Stomach (tissue), 19 donors: ENCODE measurements at regions of chr10 and their contacts with region 1.

Region 1: DNA sequence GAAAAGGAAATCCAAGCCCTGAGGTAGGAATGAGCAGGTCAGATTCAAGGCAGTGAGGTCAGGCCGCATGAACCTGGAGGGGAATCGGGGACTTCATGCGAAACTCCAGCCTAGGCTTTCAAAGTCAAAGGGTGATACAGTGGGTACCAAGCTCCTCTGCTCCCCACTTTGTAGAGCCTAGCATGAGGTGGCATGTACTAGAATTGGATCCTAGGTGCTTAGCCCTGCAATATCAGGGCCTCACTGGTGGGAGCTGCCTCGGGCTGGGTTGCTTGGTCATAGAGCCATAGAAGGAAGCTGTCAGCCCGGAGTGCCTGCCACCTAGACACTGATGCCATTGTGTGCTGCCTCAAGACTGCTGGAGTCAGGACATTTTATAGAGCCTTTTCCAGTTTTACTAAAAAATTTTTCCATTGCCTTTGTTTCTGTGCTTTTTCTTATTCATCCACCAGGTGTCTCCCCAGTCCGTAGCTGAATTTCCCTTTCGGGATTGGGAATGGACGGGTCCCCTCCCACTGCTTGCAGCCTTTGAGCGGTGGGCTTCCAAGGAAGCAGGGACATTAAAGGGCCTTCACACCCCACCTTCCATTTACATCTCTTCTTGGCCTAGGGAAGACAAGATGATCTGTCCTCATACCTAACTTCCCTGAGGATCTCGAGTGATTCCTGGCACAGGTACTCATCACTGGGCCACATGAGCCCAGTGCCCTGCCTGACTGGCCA is 5.5 kb upstream of the LZTS2 start:
- DNase-seq: peak in 1 of 2 donors; percentile 76
- H3K4me3 ChIP-seq: no peak overlapping the region
- H3K27ac ChIP-seq: no peak overlapping the region
- H3K4me1 ChIP-seq: peaks cover 20 to 44% (median 31%) of the 10 kb centered on the region in 4 donors
- H3K27me3 ChIP-seq: no peaks in the 10 kb centered on the region
- CTCF ChIP-seq: peak in 5 of 7 experiments; percentile 51 to 78 (median 63)
- EP300 ChIP-seq: no peak
- POLR2A ChIP-seq: no peak

Region 2: DNA sequence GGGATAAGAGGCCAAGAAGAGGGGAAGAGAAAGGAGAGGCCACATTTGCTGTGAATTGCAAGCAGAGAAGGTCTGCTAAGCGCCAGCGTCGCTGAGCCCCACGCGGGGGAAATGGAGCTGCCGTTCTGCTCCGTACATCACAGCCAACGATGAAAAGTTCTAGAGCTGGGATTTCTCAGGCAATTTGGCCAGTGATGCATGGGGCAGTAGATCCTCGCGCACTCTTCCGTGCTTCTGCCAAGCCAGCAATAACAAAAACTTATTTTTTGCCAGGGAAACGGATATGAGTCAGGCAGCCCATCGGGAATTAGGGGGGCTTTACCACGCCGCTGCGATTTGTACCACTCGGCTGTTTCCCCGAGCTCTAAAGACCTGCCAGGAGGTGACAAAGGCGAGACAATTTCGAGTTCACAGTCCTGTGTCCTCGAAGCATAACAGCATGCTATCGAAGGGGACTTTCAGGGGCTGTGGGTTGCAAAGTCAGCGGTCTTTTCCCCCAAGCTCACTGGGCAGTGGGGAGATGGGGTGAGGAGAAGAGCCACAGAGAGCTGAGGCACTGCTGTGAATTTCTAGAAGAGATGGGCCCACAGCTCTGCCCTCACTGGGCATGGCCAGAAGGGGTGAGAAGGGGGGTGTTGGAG is 111.4 kb before region 1 on chr10:
- intact Hi-C with region 1: no loop called
- DNase-seq: peak in 1 of 2 donors; percentile 65
- H3K4me3 ChIP-seq: no peak overlapping the region
- H3K27ac ChIP-seq: no peak overlapping the region
- H3K4me1 ChIP-seq: peaks cover 0 to 3% (median 1%) of the 10 kb centered on the region in 4 donors
- H3K27me3 ChIP-seq: peaks cover 0 to 41% (median 6%) of the 10 kb centered on the region in 3 donors
- CTCF ChIP-seq: no peak
- EP300 ChIP-seq: no peak
- POLR2A ChIP-seq: no peak

Region 3: GRCh38 chr10:101014230-101014884 is 20.2 kb after region 1 on chr10:
- intact Hi-C with region 1: loop called (anchors 2 kb)
- DNase-seq: peak; percentile 87 to 92
- H3K4me3 ChIP-seq: no peak overlapping the region
- H3K27ac ChIP-seq: no peak overlapping the region
- H3K4me1 ChIP-seq: peaks cover 25 to 51% (median 39%) of the 10 kb centered on the region in 4 donors
- H3K27me3 ChIP-seq: peaks cover 0 to 37% (median 0%) of the 10 kb centered on the region in 3 donors
- CTCF ChIP-seq: peak in 5 of 7 experiments; percentile 91 to 96 (median 95)
- EP300 ChIP-seq: no peak
- POLR2A ChIP-seq: no peak

Region 4: GRCh38 chr10:101176577-101176976 is 182.4 kb after region 1 on chr10:
- intact Hi-C with region 1: no loop called
- DNase-seq: no peak
- H3K4me3 ChIP-seq: no peak overlapping the region
- H3K27ac ChIP-seq: no peak overlapping the region
- H3K4me1 ChIP-seq: no peaks in the 10 kb centered on the region
- H3K27me3 ChIP-seq: peaks cover 0 to 75% (median 0%) of the 10 kb centered on the region in 3 donors
- CTCF ChIP-seq: no peak
- EP300 ChIP-seq: no peak
- POLR2A ChIP-seq: no peak